H1 (cell line): ENCODE measurements at regions of chr12 and their contacts with region 1.

Region 1: DNA sequence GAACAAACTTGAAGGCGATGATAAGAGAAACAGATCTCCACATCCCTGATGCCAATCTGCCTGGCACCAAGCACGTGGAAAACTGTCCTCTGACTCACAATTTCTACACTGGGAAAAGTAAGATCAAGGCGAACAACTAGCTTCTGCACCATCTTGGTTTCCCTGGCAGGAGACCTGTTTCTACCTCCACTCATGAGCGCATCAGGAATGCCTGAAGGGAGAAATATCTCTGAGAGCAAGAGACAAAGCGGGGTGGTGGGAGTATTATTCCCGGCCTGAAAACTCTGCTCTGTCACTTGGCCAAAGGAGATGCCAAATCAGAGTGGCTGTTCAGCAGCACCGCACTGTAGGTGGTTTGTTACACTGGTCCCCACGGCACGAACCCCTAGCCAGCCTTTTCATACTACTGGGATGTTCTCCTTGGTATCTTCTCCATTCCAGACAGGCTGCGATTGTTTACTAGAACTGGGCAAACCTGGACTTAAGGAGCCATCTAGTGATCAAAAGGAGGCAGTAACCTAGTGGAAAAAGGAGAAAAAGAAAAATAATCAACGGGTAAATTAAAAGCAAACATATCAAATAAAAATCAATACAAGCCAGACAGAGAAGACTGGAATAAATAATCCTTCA is 59.0 kb upstream of the TMTC2 start:
- DNase-seq: no peak
- H3K4me3 ChIP-seq: no peak overlapping the region
- H3K27ac ChIP-seq: no peak overlapping the region
- H3K4me1 ChIP-seq: no peaks in the 10 kb centered on the region
- H3K27me3 ChIP-seq: no peaks in the 10 kb centered on the region
- CTCF ChIP-seq: peak in 2 of 3 experiments; percentile 52 to 76; a peak in 3 of 4 replicates
- EP300 ChIP-seq: no peak
- POLR2A ChIP-seq: no peak
- RAD21 ChIP-seq: peak; percentile 90

Region 2: DNA sequence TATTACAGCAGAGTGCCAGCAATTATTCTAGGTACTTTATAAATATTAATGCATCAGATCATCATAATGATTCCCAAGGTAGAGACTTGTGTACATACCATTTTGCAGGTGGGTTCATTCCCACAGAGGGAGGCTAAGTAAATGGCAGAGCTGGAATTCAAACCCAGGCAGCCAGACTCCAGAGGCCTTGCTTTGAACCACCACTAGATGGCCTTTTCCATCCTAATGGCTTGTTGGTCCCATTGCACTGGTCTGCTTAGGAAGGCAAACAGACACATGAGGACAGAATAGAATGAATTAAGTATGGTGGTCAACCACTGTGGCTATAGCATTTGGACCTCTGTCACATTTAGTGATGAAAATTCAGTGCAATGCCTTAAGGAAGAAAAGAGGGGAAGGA is 110.7 kb before region 1 on chr12:
- CTCF ChIA-PET with region 1: interaction called, 13 read pairs
- POLR2A ChIA-PET with region 1: no interaction called
- DNase-seq: no peak
- H3K4me3 ChIP-seq: no peak overlapping the region
- H3K27ac ChIP-seq: no peak overlapping the region
- H3K4me1 ChIP-seq: no peaks in the 10 kb centered on the region
- H3K27me3 ChIP-seq: no peaks in the 10 kb centered on the region
- CTCF ChIP-seq: peak; percentile 44 to 88 (median 64)
- EP300 ChIP-seq: no peak
- POLR2A ChIP-seq: no peak
- RAD21 ChIP-seq: peak; percentile 44 to 62

Region 3: GRCh38 chr12:82527165-82527780 is 100.4 kb before region 1 on chr12:
- CTCF ChIA-PET with region 1: interaction called, 13 read pairs
- POLR2A ChIA-PET with region 1: no interaction called
- DNase-seq: no peak
- H3K4me3 ChIP-seq: no peak overlapping the region
- H3K27ac ChIP-seq: no peak overlapping the region
- H3K4me1 ChIP-seq: no peaks in the 10 kb centered on the region
- H3K27me3 ChIP-seq: no peaks in the 10 kb centered on the region
- CTCF ChIP-seq: peak in 2 of 3 experiments; percentile 58 to 76; a peak in 3 of 4 replicates
- EP300 ChIP-seq: no peak
- POLR2A ChIP-seq: no peak
- RAD21 ChIP-seq: peak; percentile 82 to 85

Region 4: GRCh38 chr12:82698708-82699564 is 71.3 kb after region 1 on chr12:
- CTCF ChIA-PET with region 1: no interaction called
- POLR2A ChIA-PET with region 1: no interaction called
- DNase-seq: no peak
- H3K4me3 ChIP-seq: no peak overlapping the region
- H3K27ac ChIP-seq: no peak overlapping the region
- H3K4me1 ChIP-seq: no peaks in the 10 kb centered on the region; a peak in 1 of 7 replicates
- H3K27me3 ChIP-seq: no peaks in the 10 kb centered on the region
- CTCF ChIP-seq: no peak
- EP300 ChIP-seq: no peak
- POLR2A ChIP-seq: no peak
- RAD21 ChIP-seq: no peak